Posterior cingulate gyrus (tissue), 11 donors: ENCODE measurements at regions of chr6 and their contacts with region 1.

Region 1: GRCh38 chr6:10434692-10435376 is 20.0 kb upstream of the TFAP2A start:
- DNase-seq: no peak

Region 2: DNA sequence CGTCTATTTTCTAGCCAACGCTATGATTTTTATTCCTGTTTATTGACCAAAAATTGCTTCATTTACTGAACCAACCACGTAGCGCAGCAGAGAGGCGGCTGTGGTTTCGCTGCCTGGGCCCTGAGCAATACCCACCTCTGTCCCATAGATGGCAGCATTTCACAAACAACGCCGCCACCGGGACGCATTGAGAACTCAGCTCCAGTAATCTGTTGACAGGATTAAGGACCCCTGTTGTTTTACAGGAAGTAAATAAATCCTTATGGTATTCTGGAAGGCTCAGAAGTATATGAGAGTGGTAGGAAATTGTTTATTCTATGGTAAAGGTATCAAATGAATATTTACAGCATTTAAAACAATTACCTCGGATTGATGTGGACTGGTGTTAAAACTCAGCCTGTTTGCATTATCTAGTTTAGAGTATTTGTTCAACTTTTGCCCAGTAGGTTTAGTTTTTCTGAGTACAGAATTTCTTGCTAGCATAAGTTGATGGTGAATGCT is 1451.6 kb before region 1 on chr6:
- intact Hi-C with region 1: loop called (anchors 2 kb)
- DNase-seq: peak; percentile 40 to 95 (median 68)